A549 (cell line): ENCODE measurements at regions of chr17 and their contacts with region 1.

Region 1: GRCh38 chr17:2094891-2095535 is 40.1 kb downstream of the HIC1 start:
- DNase-seq: peak in 1 of 2 experiments; percentile 31
- ATAC-seq: peak; percentile 44 to 72; a peak in 4 of 6 replicates
- H3K4me3 ChIP-seq: no peak overlapping the region
- H3K27ac ChIP-seq: no peak overlapping the region
- H3K4me1 ChIP-seq: no peaks in the 10 kb centered on the region
- CTCF ChIP-seq: no peak
- EP300 ChIP-seq: no peak
- POLR2A ChIP-seq: no peak
- RAD21 ChIP-seq: peak in 1 of 2 experiments; percentile 37; a peak in 1 of 5 replicates

Region 2: DNA sequence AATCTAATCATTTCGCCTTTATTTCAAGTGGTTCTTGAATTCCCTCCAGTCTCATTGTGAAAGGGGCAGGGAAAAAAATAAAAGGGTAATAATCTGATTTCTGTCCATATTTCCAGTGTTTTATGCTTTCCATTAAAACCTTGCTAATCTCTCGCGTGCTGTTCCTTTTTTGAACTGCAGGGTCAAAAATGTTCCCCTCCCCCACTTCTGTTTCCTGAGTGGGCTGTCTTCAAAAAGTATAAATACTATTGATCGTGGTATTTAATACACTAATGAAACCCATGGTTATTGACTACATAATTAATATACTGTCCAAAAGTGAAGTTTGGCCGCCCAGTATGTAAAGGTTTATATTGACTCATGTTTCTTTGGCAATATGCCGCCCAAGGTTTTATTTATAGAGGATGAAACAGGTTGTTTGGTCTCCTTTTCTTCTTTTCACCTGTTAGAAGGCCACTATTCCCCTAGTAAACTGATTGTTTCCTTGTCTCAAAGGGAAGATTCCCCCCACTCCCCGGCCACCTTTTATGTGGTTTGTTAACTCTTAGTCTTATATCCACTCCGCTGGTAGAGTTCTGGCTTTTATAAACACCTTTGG is 195.5 kb before region 1 on chr17:
- CTCF ChIA-PET with region 1: no interaction called
- POLR2A ChIA-PET with region 1: no interaction called
- DNase-seq: peak in 1 of 2 experiments; percentile 33
- ATAC-seq: no peak
- H3K4me3 ChIP-seq: no peak overlapping the region
- H3K27ac ChIP-seq: no peak overlapping the region
- H3K4me1 ChIP-seq: no peaks in the 10 kb centered on the region
- CTCF ChIP-seq: no peak
- EP300 ChIP-seq: no peak
- POLR2A ChIP-seq: no peak
- RAD21 ChIP-seq: no peak

Region 3: GRCh38 chr17:2081564-2081963 is 13.4 kb before region 1 on chr17:
- CTCF ChIA-PET with region 1: interaction called, 15 read pairs
- POLR2A ChIA-PET with region 1: no interaction called
- DNase-seq: no peak
- ATAC-seq: no peak
- H3K4me3 ChIP-seq: no peak overlapping the region
- H3K27ac ChIP-seq: no peak overlapping the region
- H3K4me1 ChIP-seq: peaks cover 27% of the 10 kb centered on the region
- CTCF ChIP-seq: no peak
- EP300 ChIP-seq: no peak
- POLR2A ChIP-seq: no peak
- RAD21 ChIP-seq: no peak

Region 4: GRCh38 chr17:2202996-2203575 is 108.1 kb after region 1 on chr17:
- CTCF ChIA-PET with region 1: no interaction called
- POLR2A ChIA-PET with region 1: no interaction called
- DNase-seq: no peak
- ATAC-seq: 0 out of 6 replicates have a peak, but pooled peaks of 1 of the 2 experiments have one; percentile 19
- H3K4me3 ChIP-seq: no peak overlapping the region
- H3K27ac ChIP-seq: no peak overlapping the region
- H3K4me1 ChIP-seq: no peaks in the 10 kb centered on the region
- CTCF ChIP-seq: no peak
- EP300 ChIP-seq: no peak
- POLR2A ChIP-seq: no peak
- RAD21 ChIP-seq: no peak